Heart left ventricle (tissue), 16 donors: ENCODE measurements at regions of chr13 and their contacts with region 1.

Region 1: GRCh38 chr13:109145631-109146030 is 516.2 kb downstream of the MYO16 start:
- DNase-seq: peak in 3 of 5 donors; percentile 30 to 49 (median 39)
- ATAC-seq: peak; percentile 73 to 88 (median 82)
- H3K4me3 ChIP-seq: no peak overlapping the region
- H3K27ac ChIP-seq: peak overlapping the region in 1 of 12 donors; percentile 6
- H3K4me1 ChIP-seq: peaks cover 0 to 4% (median 0%) of the 10 kb centered on the region in 12 donors
- H3K27me3 ChIP-seq: peaks cover 0 to 18% (median 7%) of the 10 kb centered on the region in 9 donors
- CTCF ChIP-seq: peak; percentile 51 to 79 (median 70)
- POLR2A ChIP-seq: no peak

Region 2: GRCh38 chr13:108961542-108962125 is 184.0 kb before region 1 on chr13:
- intact Hi-C with region 1: loop called in 2 of 10 experiments (anchors 10 kb)
- DNase-seq: no peak
- ATAC-seq: peak; percentile 41 to 85 (median 82)
- H3K4me3 ChIP-seq: no peak overlapping the region
- H3K27ac ChIP-seq: peak overlapping the region in 1 of 12 donors; percentile 5
- H3K4me1 ChIP-seq: peaks cover 0 to 6% (median 0%) of the 10 kb centered on the region in 12 donors
- H3K27me3 ChIP-seq: no peaks in the 10 kb centered on the region
- CTCF ChIP-seq: peak; percentile 81 to 92 (median 86)
- POLR2A ChIP-seq: no peak

Region 3: DNA sequence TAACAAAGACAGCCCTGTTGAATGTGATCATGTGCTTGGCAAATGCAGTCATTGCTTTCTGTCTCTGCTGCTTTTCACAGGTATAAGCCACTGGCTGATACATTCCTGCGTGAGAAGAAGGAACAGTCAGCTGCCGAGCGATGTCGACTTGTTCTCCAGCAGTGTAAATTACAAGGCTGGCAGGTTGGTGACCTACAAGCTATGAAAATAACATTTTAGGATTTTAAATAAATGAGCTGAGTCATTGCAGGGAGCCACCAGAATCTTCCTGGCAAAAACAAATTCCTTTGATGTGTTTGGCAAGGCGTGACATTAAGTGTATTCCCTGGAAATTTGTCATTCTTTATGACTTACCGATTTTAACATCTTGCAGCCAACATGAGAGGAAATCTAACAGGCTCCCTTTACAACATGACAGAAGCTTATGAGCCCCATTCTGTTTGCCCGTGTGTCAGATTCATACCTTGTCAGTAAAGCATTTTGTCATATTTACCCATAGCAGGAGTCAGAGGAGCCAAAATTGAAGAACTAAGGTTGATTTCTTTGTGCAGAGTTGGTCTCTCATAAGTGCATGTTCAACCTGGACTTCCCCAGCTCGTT is 44.8 kb before region 1 on chr13:
- intact Hi-C with region 1: no loop called
- DNase-seq: no peak
- ATAC-seq: no peak
- H3K4me3 ChIP-seq: no peak overlapping the region
- H3K27ac ChIP-seq: no peak overlapping the region
- H3K4me1 ChIP-seq: no peaks in the 10 kb centered on the region
- H3K27me3 ChIP-seq: no peaks in the 10 kb centered on the region
- CTCF ChIP-seq: no peak
- POLR2A ChIP-seq: no peak

Region 4: GRCh38 chr13:109331898-109332297 is 186.3 kb after region 1 on chr13:
- intact Hi-C with region 1: loop called (anchors 5 to 10 kb)
- DNase-seq: no peak
- ATAC-seq: no peak
- H3K4me3 ChIP-seq: no peak overlapping the region
- H3K27ac ChIP-seq: no peak overlapping the region
- H3K4me1 ChIP-seq: peaks cover 0 to 7% (median 0%) of the 10 kb centered on the region in 12 donors
- H3K27me3 ChIP-seq: no peaks in the 10 kb centered on the region
- CTCF ChIP-seq: no peak
- POLR2A ChIP-seq: no peak

Region 5: GRCh38 chr13:109376936-109377335 is 231.3 kb after region 1 on chr13:
- intact Hi-C with region 1: no loop called
- DNase-seq: no peak
- ATAC-seq: no peak
- H3K4me3 ChIP-seq: no peak overlapping the region
- H3K27ac ChIP-seq: no peak overlapping the region
- H3K4me1 ChIP-seq: peaks cover 0 to 5% (median 0%) of the 10 kb centered on the region in 12 donors
- H3K27me3 ChIP-seq: no peaks in the 10 kb centered on the region
- CTCF ChIP-seq: no peak
- POLR2A ChIP-seq: no peak

Region 6: GRCh38 chr13:109778102-109778542 is 632.5 kb after region 1 on chr13:
- intact Hi-C with region 1: loop called in 5 of 10 experiments (anchors 5 to 10 kb)
- DNase-seq: no peak
- ATAC-seq: peak in 3 of 4 donors; percentile 25 to 32 (median 27)
- H3K4me3 ChIP-seq: peak overlapping the region in 5 of 12 donors; percentile 11 to 95 (median 58)
- H3K27ac ChIP-seq: no peak overlapping the region
- H3K4me1 ChIP-seq: peaks cover 5 to 66% (median 42%) of the 10 kb centered on the region in 12 donors
- H3K27me3 ChIP-seq: no peaks in the 10 kb centered on the region
- CTCF ChIP-seq: no peak
- POLR2A ChIP-seq: no peak